Activated CD4-positive, alpha-beta memory T cell treated with anti-CD3 and anti-CD28 coated beads for 36 hours (primary cell): ENCODE measurements at regions of chr10 and their contacts with region 1.

Region 1: GRCh38 chr10:42552493-42553407 is 85.6 kb downstream of the ZNF33B start:
- DNase-seq: peak; percentile 97
- H3K4me3 Mint-ChIP-seq: peak overlapping the region; percentile 95
- H3K27ac Mint-ChIP-seq: peak overlapping the region; percentile 87
- H3K4me1 Mint-ChIP-seq: peaks cover 35% of the 10 kb centered on the region
- H3K27me3 Mint-ChIP-seq: no peaks in the 10 kb centered on the region

Region 2: GRCh38 chr10:42782446-42783180 is 229.9 kb after region 1 on chr10 and contains the start of gene BMS1:
- CTCF ChIA-PET with region 1: no interaction called
- POLR2A ChIA-PET with region 1: no interaction called
- intact Hi-C with region 1: loop called (anchors 1 kb)
- DNase-seq: peak; percentile 94
- H3K4me3 Mint-ChIP-seq: peak within 1 kb of the TSS; percentile 85
- H3K27ac Mint-ChIP-seq: peak within 1 kb of the TSS; percentile 90
- H3K4me1 Mint-ChIP-seq: peaks cover 17% of the 10 kb centered on the region
- H3K27me3 Mint-ChIP-seq: peaks cover 1% of the 10 kb centered on the region
- total RNA-seq, gene BMS1: 25.5 to 25.9 TPM

Region 3: GRCh38 chr10:42795701-42796100 is 243.0 kb after region 1 on chr10:
- CTCF ChIA-PET with region 1: no interaction called
- POLR2A ChIA-PET with region 1: no interaction called
- intact Hi-C with region 1: loop called (anchors 5 kb)
- DNase-seq: no peak
- H3K4me3 Mint-ChIP-seq: no peak overlapping the region
- H3K27ac Mint-ChIP-seq: no peak overlapping the region
- H3K4me1 Mint-ChIP-seq: peaks cover 10% of the 10 kb centered on the region
- H3K27me3 Mint-ChIP-seq: no peaks in the 10 kb centered on the region

Region 4: DNA sequence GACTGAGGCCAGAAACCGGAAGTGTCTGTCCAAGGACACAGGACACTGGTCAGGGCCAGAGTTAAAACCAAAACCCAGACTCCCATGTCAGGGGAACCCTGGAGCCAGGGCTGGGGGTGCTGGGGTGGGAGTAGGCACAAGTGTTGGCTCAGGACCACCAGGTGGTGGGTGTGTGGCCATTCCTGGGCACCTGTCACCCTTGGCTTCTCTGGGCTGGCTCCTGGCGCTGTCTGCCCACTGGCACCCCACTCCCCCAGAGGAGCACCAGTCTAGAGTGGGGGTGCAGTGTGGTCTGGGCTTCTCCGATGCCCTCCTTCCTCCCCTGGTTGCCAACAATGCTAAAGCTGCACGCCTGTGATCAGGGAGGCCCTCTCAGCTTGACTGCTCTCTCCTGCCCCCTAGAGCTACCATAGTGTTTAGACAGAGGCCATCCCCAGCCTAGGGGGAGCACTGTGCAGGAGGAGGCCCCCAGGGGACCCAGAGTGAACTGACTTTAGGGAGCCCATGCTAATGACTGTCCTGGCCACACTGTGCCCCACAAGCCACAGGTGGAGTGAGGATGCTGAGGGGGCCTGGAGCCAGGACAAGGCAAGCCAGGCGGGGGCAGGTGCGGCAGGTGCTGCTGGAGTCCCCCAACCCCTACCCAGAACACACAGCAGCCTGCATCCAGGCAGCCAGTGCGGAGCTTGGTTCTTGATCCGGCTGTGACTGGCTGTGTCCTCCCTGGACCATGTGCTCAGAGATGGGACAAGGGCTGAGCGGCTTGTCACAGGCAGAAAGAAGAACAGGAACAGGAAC is 703.1 kb after region 1 on chr10:
- CTCF ChIA-PET with region 1: no interaction called
- POLR2A ChIA-PET with region 1: no interaction called
- intact Hi-C with region 1: no loop called
- DNase-seq: peak; percentile 54
- H3K4me3 Mint-ChIP-seq: no peak overlapping the region
- H3K27ac Mint-ChIP-seq: no peak overlapping the region
- H3K4me1 Mint-ChIP-seq: peaks cover 7% of the 10 kb centered on the region
- H3K27me3 Mint-ChIP-seq: no peaks in the 10 kb centered on the region

Region 5: DNA sequence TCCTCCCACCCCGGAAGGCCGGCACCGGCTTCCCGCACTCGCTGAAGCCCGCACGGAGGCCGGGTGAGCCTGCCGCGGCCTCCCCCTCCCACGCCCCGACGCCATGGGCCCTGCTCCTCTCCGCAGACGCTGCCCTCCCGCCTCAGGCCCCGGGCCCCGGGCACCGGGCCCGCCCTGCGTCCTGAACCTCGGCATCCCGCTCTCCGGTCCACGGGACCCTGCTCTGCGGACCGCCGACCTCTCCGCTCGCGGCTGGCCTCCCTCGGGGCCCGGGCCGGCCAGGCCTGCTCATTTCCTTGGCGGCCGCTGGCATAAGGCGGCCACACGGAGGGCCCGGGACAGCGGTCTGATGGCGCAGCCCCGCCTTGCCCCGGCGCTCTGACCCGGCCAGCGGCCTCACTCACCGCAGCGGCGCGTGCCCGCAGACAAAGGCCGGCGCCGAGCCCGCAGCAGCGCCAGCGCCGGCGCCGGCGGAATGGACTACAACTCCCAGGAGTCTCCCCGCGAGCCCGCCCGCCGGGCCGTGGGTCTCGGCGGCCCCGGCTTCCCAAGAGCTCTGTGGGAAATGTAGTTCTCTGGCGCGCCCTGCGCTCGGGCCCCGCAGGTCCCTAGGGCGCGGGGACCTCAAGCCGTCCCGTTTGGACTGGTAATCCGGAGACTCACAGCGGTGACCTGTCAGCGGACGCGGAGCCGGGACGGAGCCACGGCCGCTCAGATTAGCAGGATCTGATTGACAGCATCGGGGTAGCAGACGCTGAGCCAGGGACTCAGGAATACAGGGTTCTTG is 1095.8 kb after region 1 on chr10 and contains the start of gene ZNF32:
- CTCF ChIA-PET with region 1: no interaction called
- POLR2A ChIA-PET with region 1: no interaction called
- intact Hi-C with region 1: loop called (anchors 2 kb)
- DNase-seq: peak; percentile 87
- H3K4me3 Mint-ChIP-seq: peak within 1 kb of the TSS; percentile 84
- H3K27ac Mint-ChIP-seq: peak within 1 kb of the TSS; percentile 87
- H3K4me1 Mint-ChIP-seq: peaks cover 15% of the 10 kb centered on the region
- H3K27me3 Mint-ChIP-seq: peaks cover 3% of the 10 kb centered on the region
- total RNA-seq, gene ZNF32: 12.2 to 13.5 TPM